HepG2 (cell line): ENCODE measurements at regions of chr19 and their contacts with region 1.

Region 1: GRCh38 chr19:14347999-14348889 is 33.0 kb upstream of the ADGRE5 start:
- DNase-seq: peak; percentile 28
- ATAC-seq: peak; percentile 72
- H3K4me3 ChIP-seq: peak overlapping the region in 1 of 3 experiments; percentile 51; a peak in 1 of 6 replicates
- H3K27ac ChIP-seq: no peak overlapping the region
- H3K4me1 ChIP-seq: peaks cover 32% of the 10 kb centered on the region
- H3K27me3 ChIP-seq: peaks cover 5 to 24% of the 10 kb centered on the region in 2 experiments; a peak in 4 of 5 replicates
- CTCF ChIP-seq: peak; percentile 92
- EP300 ChIP-seq: 0 out of 4 replicates have a peak, but pooled peaks of 1 of the 2 experiments have one; percentile 6
- POLR2A ChIP-seq: no peak
- RAD21 ChIP-seq: peak; percentile 90

Region 2: DNA sequence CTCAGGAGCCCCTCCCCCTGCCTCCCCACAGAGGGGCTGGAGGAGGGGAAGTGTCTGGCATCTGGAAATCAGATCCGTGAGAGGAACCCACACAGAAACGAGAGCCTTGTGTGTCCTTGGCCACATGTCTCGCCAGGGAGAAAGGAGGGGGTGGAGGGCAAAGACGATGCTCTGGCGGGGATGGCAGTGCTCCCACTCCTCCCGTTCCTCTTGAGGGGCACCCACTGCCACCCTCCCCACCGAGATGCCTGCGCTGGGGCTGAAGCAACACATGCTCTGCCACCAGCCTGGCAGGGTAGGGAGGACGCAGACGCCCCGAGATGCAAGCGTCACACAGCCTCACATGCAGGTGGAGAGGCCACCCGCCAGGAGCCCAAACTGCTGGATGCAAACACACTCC is 145.1 kb before region 1 on chr19:
- CTCF ChIA-PET with region 1: interaction called, 8 read pairs
- POLR2A ChIA-PET with region 1: no interaction called
- in situ Hi-C with region 1: loop called (anchors 5 kb)
- intact Hi-C with region 1: no loop called
- DNase-seq: no peak
- ATAC-seq: no peak
- H3K4me3 ChIP-seq: no peak overlapping the region
- H3K27ac ChIP-seq: no peak overlapping the region
- H3K4me1 ChIP-seq: peaks cover 11% of the 10 kb centered on the region
- H3K27me3 ChIP-seq: peaks cover 2 to 9% of the 10 kb centered on the region in 2 experiments; a peak in 2 of 5 replicates
- CTCF ChIP-seq: no peak
- EP300 ChIP-seq: no peak
- POLR2A ChIP-seq: no peak
- RAD21 ChIP-seq: no peak